ENCODE measurements at regions of chr1 and their contacts with region 1.

Region 1: DNA sequence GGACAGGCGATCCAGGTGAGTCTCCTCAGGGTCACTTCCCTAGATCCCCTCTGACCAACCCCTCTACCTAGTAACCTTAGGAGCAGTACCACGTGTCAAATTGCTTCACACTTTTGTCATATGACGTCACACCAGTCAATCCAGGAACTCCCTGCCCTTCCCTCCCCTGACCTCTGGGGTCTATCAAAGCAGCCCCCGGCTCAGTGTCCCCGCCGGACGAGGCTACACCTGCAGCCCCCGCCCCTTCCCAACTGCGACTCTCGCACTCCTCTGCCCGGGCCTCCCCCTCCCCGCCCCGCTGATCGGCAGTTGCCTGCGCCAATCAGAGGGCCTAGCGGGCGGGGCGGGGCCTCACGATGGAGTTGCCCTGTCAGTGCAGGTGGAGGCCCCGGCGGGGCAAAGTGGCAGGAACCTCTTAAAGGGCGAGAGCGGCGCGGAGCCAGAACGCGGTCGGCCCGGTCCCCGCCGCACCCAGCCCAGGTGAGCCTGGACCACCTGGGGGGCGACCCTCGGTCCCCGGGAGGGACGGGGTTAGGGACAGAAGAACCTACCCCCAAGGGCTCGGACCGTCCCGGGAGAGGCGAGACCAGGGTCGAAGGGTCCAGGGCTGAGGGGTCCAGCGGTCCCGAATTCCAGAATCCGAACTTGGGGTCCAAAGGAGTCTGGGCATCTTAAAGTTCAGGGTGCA is 27.5 kb upstream of the EPB41 start:
- DNase-seq: peak; percentile 82 to 93 (median 88)
- ATAC-seq: peak; percentile 75 to 79 (median 76)
- H3K4me3 ChIP-seq: peak overlapping the region; percentile 88 to 97
- H3K4me3 Mint-ChIP-seq: peak overlapping the region; percentile 75 to 92 (median 85)
- H3K27ac ChIP-seq: peak overlapping the region; percentile 68
- H3K27ac Mint-ChIP-seq: peak overlapping the region; percentile 71 to 83
- H3K4me1 ChIP-seq: peaks cover 29 to 63% of the 10 kb centered on the region in 2 experiments
- H3K4me1 Mint-ChIP-seq: peaks cover 60 to 65% (median 61%) of the 10 kb centered on the region in 3 donors
- H3K27me3 ChIP-seq: no peaks in the 10 kb centered on the region
- H3K27me3 Mint-ChIP-seq: no peaks in the 10 kb centered on the region

Region 2: DNA sequence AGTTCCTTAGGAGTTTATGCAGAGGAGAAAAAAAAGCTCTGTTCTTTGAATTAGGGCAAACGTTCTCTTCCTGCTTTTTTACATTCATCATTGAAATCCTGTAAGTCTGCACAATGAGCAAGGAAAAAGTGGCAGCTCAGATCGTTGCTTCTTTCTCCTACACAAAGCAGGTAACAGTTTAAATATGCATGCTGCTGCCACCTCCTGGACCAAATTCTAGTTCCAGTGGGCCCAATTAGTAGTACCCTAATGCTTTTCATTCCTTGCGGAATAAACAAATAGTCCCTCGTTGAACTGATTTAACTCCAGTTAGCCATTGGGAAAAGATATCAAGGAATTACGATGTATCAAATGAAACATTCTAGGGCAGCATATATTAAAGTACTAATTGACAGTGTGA is 130.0 kb before region 1 on chr1:
- CTCF ChIA-PET with region 1: interaction called in 1 of 2 experiments, 13 read pairs
- POLR2A ChIA-PET with region 1: no interaction called
- DNase-seq: peak in 2 of 35 experiments; percentile 10 to 38
- ATAC-seq: peak in 2 of 4 experiments; percentile 46 to 50
- H3K4me3 ChIP-seq: no peak overlapping the region
- H3K4me3 Mint-ChIP-seq: no peak overlapping the region
- H3K27ac ChIP-seq: no peak overlapping the region
- H3K27ac Mint-ChIP-seq: peak overlapping the region in 1 of 2 donors; percentile 77
- H3K4me1 ChIP-seq: peaks cover 14 to 40% of the 10 kb centered on the region in 2 experiments
- H3K4me1 Mint-ChIP-seq: peaks cover 36 to 38% (median 37%) of the 10 kb centered on the region in 3 donors
- H3K27me3 ChIP-seq: no peaks in the 10 kb centered on the region
- H3K27me3 Mint-ChIP-seq: no peaks in the 10 kb centered on the region

Region 3: DNA sequence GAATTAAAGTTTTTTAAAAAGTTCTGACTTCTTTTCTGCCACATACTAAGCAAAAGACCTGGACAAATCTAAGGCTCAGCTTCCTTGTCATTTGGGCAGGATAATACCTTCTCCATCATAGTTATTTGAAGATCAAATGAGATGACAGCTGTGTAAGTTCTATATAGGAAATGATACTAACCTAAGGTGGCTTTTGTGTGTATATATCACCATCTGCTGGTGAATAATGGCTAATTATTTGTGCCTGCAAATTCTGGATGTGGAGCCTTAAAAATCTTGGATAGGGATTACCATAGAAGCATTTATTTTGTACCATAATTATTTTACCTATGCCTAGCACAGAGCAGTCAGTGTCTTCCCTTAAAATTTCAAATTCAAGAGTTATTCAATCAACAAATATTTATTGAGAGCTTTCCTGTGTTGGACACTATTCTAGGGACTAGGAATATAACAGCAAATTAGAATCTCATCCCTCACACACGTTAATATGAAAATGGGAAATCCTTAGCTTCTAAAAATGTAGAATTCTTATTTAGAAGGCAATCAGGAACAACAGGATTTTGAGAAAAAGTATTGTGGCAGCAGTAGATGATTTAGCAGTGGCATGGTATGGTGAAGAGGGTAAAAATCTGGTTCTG is 147.1 kb after region 1 on chr1:
- CTCF ChIA-PET with region 1: interaction called, 10 to 92 read pairs
- POLR2A ChIA-PET with region 1: no interaction called
- DNase-seq: peak in 2 of 35 experiments; percentile 10 to 63
- ATAC-seq: peak in 3 of 4 experiments; percentile 41 to 57 (median 44)
- H3K4me3 ChIP-seq: no peak overlapping the region
- H3K4me3 Mint-ChIP-seq: no peak overlapping the region
- H3K27ac ChIP-seq: no peak overlapping the region
- H3K27ac Mint-ChIP-seq: no peak overlapping the region
- H3K4me1 ChIP-seq: no peaks in the 10 kb centered on the region
- H3K4me1 Mint-ChIP-seq: peaks cover 0 to 4% (median 0%) of the 10 kb centered on the region in 3 donors
- H3K27me3 ChIP-seq: no peaks in the 10 kb centered on the region
- H3K27me3 Mint-ChIP-seq: no peaks in the 10 kb centered on the region

Region 4: GRCh38 chr1:29181413-29182225 is 294.7 kb after region 1 on chr1 and contains the start of gene SRSF4:
- CTCF ChIA-PET with region 1: interaction called in 1 of 2 experiments, 11 read pairs
- POLR2A ChIA-PET with region 1: no interaction called
- DNase-seq: peak; percentile 96 to 99 (median 98)
- ATAC-seq: peak; percentile 89 to 97 (median 92)
- H3K4me3 ChIP-seq: peak within 1 kb of the TSS; percentile 89 to 98
- H3K4me3 Mint-ChIP-seq: peak within 1 kb of the TSS; percentile 89 to 95 (median 92)
- H3K27ac ChIP-seq: peak within 1 kb of the TSS; percentile 99
- H3K27ac Mint-ChIP-seq: peak within 1 kb of the TSS; percentile 92 to 96
- H3K4me1 ChIP-seq: peaks cover 30 to 33% of the 10 kb centered on the region in 2 experiments
- H3K4me1 Mint-ChIP-seq: peaks cover 51 to 57% (median 51%) of the 10 kb centered on the region in 3 donors
- H3K27me3 ChIP-seq: no peaks in the 10 kb centered on the region
- H3K27me3 Mint-ChIP-seq: no peaks in the 10 kb centered on the region
- total RNA-seq, gene SRSF4: 76.0 to 90.4 (median 78.9) TPM

Region 5: DNA sequence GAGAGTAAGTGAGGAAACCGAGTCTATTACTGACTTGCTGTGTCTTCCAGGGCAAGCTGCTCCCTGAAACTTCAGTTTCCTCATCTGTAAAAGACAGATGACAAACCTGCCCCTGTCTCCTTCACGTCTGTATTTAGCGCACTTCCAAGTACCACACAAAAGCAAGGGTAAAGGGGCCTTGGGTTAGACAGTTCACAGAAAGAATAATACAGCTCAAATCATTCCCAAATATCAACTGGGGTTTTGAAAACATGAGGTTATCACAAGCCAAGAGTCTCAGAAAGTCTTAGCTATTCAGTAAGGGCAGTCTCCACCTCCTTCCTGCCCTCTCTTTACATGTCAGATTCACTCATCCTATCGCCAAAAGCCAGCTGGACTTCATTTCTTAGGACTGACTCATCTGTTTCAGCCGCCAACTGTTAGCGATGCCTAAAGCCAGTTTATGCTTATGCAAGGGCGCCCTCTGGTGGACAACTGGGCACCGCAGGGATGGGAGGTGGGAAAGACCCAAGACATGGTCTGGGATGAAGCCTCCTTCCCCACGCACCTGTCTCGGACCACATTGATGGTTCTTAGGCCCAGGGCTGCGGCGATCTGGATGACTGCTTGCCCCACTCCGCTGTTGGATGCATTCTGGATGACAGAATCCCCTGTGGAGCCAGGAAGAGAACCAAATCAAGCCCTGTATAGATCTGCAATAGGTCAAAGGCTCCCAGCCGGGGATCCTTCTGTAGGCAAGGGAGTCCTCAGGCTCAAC is 315.9 kb after region 1 on chr1:
- CTCF ChIA-PET with region 1: interaction called in 1 of 2 experiments, 12 read pairs
- POLR2A ChIA-PET with region 1: no interaction called
- DNase-seq: peak; percentile 55 to 91 (median 81)
- ATAC-seq: peak; percentile 88 to 93 (median 93)
- H3K4me3 ChIP-seq: no peak overlapping the region
- H3K4me3 Mint-ChIP-seq: no peak overlapping the region
- H3K27ac ChIP-seq: no peak overlapping the region
- H3K27ac Mint-ChIP-seq: no peak overlapping the region
- H3K4me1 ChIP-seq: no peaks in the 10 kb centered on the region
- H3K4me1 Mint-ChIP-seq: peaks cover 0 to 3% (median 0%) of the 10 kb centered on the region in 3 donors
- H3K27me3 ChIP-seq: no peaks in the 10 kb centered on the region
- H3K27me3 Mint-ChIP-seq: no peaks in the 10 kb centered on the region